ENCODE measurements at regions of chr11 and their contacts with region 1.

Region 1: GRCh38 chr11:9613118-9613829 is 39.8 kb downstream of the WEE1 start:
- H3K4me3 ChIP-seq: peak overlapping the region; percentile 37
- H3K27ac ChIP-seq: peak overlapping the region; percentile 61
- H3K4me1 ChIP-seq: no peaks in the 10 kb centered on the region
- CTCF ChIP-seq: peak; percentile 86

Region 2: GRCh38 chr11:9118277-9118676 is 495.0 kb before region 1 on chr11:
- CTCF ChIA-PET with region 1: no interaction called
- POLR2A ChIA-PET with region 1: no interaction called
- H3K4me3 ChIP-seq: no peak overlapping the region
- H3K27ac ChIP-seq: no peak overlapping the region
- H3K4me1 ChIP-seq: no peaks in the 10 kb centered on the region
- CTCF ChIP-seq: no peak

Region 3: GRCh38 chr11:9573052-9573774 is 40.1 kb before region 1 on chr11 and contains the start of gene WEE1:
- CTCF ChIA-PET with region 1: interaction called, 4 read pairs
- POLR2A ChIA-PET with region 1: interaction called, 17 read pairs
- H3K4me3 ChIP-seq: peak within 1 kb of the TSS; percentile 100
- H3K27ac ChIP-seq: peak within 1 kb of the TSS; percentile 98
- H3K4me1 ChIP-seq: no peaks in the 10 kb centered on the region
- CTCF ChIP-seq: 0 out of 2 replicates have a peak, but pooled peaks have one; percentile 11

Region 4: DNA sequence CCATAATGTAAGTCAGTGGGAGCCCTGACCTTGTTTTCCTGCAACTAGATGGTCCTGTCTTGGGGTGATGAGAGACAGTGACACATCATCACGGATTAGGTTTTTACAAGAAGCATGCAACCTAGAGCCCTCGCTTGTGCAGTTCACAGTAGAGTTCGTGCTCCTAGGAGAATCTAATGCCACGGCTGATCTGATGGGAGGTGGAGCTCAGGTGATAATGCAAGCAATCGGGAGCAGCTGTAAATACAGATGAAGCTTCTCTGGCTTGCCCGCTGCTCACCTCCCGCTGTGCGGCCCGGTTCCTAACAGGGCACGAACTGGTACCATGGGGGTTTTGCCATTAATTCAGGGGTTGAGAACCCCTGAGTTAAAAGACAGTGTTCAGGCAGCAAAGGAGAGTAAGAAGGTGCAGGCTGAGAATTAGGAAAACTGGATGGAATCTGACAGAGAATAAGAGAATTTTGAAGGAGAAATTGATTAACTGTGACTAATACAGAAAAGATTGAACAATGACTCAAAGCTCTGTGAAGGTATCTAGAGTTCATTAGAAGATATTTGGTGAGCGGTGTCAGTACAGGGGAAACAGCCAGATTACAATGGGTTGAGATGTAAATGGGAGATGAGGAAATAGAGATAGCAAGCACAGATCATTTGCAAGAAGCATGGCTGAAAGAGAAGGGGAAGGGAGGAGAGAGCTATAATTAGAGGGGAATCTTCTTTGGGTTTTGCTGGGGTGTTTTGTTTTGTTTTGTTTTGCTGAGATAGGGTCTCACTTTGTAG is 18.8 kb before region 1 on chr11:
- CTCF ChIA-PET with region 1: interaction called, 18 read pairs
- POLR2A ChIA-PET with region 1: interaction called, 3 read pairs
- H3K4me3 ChIP-seq: no peak overlapping the region
- H3K27ac ChIP-seq: no peak overlapping the region
- H3K4me1 ChIP-seq: no peaks in the 10 kb centered on the region
- CTCF ChIP-seq: no peak

Region 5: DNA sequence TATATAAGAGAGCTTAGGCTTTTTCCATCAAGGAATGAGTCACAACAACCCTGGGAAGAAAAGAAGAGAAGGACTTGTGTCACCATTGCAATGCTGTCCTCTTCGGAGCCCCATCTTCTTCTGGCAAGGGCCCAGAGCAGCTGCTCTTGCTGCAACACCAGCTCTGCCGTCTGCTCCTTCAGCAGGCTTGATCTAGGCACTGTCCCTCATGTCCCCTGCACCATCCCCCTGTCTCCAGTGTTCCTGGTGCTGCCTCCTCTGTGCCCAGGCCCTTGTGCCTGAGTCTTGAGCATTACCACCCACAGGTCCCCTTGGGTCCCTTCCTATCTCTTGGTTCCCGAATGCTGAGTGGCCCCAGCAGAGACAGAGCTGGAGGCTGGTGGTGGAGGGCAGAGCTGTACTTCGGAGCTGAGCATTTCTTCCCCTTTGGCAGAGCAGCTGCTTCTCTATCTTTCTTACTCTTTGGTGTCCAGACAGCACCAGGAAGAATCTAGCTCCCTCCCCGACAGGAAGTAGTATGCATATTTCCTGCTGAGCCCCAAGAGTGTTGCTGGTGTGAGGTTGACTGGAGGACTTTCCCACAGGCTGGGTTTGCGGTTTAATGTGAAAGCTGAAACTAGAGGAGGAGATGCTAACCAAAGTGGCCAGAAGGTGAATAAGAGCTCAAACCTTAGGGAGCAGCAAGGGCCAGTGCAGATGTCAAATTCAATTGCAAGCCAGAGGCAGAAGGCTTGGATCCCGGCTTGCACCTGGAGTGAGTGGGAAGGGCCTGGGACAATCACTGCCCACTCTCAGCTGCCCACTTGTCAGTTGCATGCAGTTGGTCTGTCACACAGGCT is 12.0 kb before region 1 on chr11:
- CTCF ChIA-PET with region 1: interaction called, 18 read pairs
- POLR2A ChIA-PET with region 1: interaction called, 3 read pairs
- H3K4me3 ChIP-seq: no peak overlapping the region
- H3K27ac ChIP-seq: no peak overlapping the region
- H3K4me1 ChIP-seq: no peaks in the 10 kb centered on the region
- CTCF ChIP-seq: no peak

Region 6: GRCh38 chr11:9693801-9694553 is 80.7 kb after region 1 on chr11:
- CTCF ChIA-PET with region 1: no interaction called
- POLR2A ChIA-PET with region 1: no interaction called
- H3K4me3 ChIP-seq: no peak overlapping the region
- H3K27ac ChIP-seq: no peak overlapping the region
- H3K4me1 ChIP-seq: 0 out of 2 replicates have a peak, but pooled peaks cover 5% of the 10 kb centered on the region
- CTCF ChIP-seq: no peak